K562 (cell line): ENCODE measurements at regions of chr17 and their contacts with region 1.

Region 1: DNA sequence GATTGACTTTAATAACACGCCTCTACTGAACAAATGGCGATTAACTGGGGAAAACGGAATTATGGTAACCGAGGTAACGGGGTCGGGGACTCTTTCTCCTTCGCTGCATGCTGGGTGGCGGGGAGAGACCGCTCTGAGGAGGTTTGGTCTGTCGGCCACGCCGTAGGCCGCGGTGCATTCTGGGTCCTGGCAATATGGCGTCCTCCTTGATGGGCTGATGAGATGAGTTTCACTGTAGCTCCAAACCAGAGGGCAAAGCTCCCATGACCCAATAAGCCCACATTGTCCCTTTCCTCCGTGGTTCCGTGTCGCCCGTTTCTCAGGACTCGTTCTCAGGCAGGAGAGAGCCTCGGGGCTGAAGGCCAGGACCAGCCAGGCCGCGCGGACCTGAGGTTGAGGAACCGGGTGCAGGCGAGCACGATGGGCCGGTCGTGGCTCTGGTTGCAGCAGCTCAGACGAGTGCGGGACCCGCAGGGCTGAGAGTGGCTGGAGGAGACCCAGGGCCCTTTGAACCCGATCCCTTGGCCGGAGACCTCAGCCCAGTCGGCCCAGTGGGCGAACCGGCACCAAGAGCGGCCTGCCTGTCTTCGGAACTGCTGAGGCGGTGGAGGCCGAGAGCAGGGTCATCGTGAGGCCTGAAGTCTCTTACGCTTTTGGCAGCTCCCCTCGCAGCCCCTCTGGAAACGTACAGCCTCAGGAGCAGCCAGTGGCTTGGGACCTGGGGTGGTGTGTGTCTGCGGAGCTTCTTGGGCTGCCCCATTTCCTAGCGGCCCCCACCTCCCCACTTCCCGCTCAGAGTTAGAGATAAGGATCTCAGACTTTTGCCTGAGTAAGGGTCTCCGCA is at the start of gene RPTOR:
- DNase-seq: peak; percentile 88 to 95 (median 91)
- ATAC-seq: peak; percentile 91
- H3K4me3 ChIP-seq: peak within 1 kb of the TSS; percentile 96
- H3K27ac ChIP-seq: peak within 1 kb of the TSS; percentile 97
- H3K4me1 ChIP-seq: peaks cover 5 to 8% of the 10 kb centered on the region in 2 experiments; a peak in 3 of 5 replicates
- H3K27me3 ChIP-seq: peaks cover 0 to 17% of the 10 kb centered on the region in 2 experiments; a peak in 3 of 5 replicates
- CTCF ChIP-seq: no peak
- EP300 ChIP-seq: no peak
- POLR2A ChIP-seq: peak; percentile 95
- RAD21 ChIP-seq: no peak
- polyA plus RNA-seq, gene RPTOR: 0.24 to 0.35 TPM

Region 2: GRCh38 chr17:80491478-80492342 is 53.2 kb before region 1 on chr17:
- CTCF ChIA-PET with region 1: no interaction called
- POLR2A ChIA-PET with region 1: no interaction called
- in situ Hi-C with region 1: no loop called
- intact Hi-C with region 1: no loop called
- DNase-seq: no peak
- ATAC-seq: peak; percentile 42; the same call in 1 of the 3 replicates
- H3K4me3 ChIP-seq: no peak overlapping the region
- H3K27ac ChIP-seq: no peak overlapping the region
- H3K4me1 ChIP-seq: peaks cover 0 to 7% of the 10 kb centered on the region in 2 experiments; a peak in 2 of 5 replicates
- H3K27me3 ChIP-seq: peaks cover 9 to 59% of the 10 kb centered on the region in 2 experiments; a peak in 4 of 5 replicates
- CTCF ChIP-seq: no peak
- EP300 ChIP-seq: no peak
- POLR2A ChIP-seq: no peak
- RAD21 ChIP-seq: no peak

Region 3: DNA sequence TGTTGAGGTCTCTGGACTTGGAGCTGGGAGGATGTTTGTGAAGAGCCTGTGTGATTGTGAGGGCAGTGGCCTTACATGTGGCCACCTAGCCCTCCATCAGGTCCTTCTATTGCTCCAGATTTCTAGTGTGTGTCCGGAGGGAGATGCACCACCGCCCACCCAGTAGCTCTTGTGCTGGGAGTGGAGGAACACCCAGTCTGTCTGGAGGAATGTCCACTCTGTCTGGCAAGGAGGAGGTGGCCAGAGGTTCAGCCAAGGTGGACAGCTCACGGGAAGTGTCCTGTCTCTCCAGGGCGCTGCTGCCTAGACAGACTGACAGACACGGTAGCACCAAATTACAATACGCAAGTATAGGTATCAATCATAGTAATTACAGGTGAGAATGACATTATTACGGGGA is 10.4 kb after region 1 on chr17:
- CTCF ChIA-PET with region 1: no interaction called
- POLR2A ChIA-PET with region 1: interaction called, 17 read pairs
- in situ Hi-C with region 1: no loop called
- intact Hi-C with region 1: no loop called
- DNase-seq: no peak
- ATAC-seq: no peak
- H3K4me3 ChIP-seq: no peak overlapping the region
- H3K27ac ChIP-seq: no peak overlapping the region
- H3K4me1 ChIP-seq: no peaks in the 10 kb centered on the region; a peak in 1 of 5 replicates
- H3K27me3 ChIP-seq: no peaks in the 10 kb centered on the region
- CTCF ChIP-seq: no peak
- EP300 ChIP-seq: no peak
- POLR2A ChIP-seq: no peak
- RAD21 ChIP-seq: no peak